ENCODE measurements at regions of chr1 and their contacts with region 1.

Region 1: DNA sequence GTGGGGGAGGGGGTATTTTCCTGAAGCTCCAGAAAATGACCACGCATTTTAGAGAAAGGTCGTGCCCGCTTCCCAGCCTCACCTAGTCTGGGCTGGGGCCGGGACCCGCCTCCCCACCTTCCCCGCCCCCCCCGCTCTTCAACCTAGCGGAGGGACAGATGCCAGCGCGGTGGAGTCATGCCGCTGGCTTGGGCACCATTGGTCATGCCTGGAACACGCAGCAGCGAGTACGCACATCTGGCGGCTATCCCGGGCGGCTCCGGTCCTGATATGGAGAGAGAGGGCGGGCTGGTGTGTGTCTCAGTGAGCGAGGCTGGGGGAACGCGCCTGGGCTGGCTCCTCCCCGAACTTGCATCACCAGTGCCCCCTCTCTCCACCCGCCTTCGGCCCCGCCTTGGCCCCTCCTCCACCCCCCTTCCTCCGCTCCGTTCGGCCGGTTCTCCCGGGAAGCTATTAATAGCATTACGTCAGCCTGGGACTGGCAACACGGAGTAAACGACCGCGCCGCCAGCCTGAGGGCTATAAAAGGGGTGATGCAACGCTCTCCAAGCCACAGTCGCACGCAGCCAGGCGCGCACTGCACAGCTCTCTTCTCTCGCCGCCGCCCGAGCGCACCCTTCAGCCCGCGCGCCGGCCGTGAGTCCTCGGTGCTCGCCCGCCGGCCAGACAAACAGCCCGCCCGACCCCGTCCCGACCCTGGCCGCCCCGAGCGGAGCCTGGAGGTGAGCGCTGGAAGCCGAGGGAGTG is at the start of gene ATF3:
- DNase-seq: peak; percentile 98
- H3K4me3 Mint-ChIP-seq: peak within 1 kb of the TSS; percentile 90
- H3K27ac Mint-ChIP-seq: peak within 1 kb of the TSS; percentile 92
- H3K4me1 Mint-ChIP-seq: peaks cover 52% of the 10 kb centered on the region
- H3K27me3 Mint-ChIP-seq: peaks cover 43% of the 10 kb centered on the region
- total RNA-seq, gene ATF3: 67.4 to 67.7 TPM

Region 2: GRCh38 chr1:212414328-212415106 is 193.9 kb before region 1 on chr1 and contains the start of gene PACC1:
- CTCF ChIA-PET with region 1: no interaction called
- intact Hi-C with region 1: loop called (anchors 5 kb)
- DNase-seq: peak; percentile 88
- H3K4me3 Mint-ChIP-seq: peak within 1 kb of the TSS; percentile 95
- H3K27ac Mint-ChIP-seq: peak within 1 kb of the TSS; percentile 72
- H3K4me1 Mint-ChIP-seq: peaks cover 23% of the 10 kb centered on the region
- H3K27me3 Mint-ChIP-seq: no peaks in the 10 kb centered on the region
- total RNA-seq, gene PACC1: 9.5 to 10.2 TPM

Region 3: DNA sequence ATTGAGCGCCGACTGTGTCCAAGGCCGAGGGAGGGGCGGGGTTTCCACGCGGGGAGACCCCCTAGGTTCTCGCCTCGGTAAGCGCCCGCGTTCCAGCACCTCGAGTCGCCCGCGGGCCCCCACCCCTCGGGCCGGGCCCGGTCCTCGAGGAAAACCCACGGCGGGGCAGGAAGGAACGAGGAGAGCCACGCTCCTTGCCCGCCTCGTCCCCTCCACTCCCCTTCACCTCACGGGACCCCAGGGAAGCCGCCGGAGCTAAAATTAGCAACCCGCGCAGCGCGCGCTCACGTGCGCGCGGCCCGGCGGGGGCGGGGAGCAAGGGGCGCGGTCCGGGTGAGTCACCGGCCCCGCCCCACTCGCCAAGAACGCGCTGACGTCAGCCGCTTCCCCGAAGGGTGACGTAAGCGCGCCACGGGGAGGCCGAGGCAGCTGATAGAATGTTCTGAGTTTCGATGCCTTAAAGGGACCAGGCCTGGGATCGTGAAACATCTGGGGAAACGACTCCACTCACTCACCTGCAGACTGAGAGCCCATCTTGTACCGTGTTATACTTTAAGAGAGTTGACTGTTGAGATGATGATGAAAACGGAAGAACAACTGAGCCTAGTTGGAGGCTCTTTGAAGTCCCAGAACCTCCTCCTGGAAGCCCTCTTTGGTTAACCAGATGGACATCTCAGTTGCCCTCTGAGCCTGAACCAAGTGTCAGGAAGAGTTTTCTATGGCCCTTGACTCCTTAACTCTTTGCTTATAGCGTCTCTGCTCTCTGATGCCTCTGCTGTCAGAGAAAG is 49.5 kb before region 1 on chr1:
- CTCF ChIA-PET with region 1: no interaction called
- intact Hi-C with region 1: loop called (anchors 1 kb)
- DNase-seq: peak; percentile 94
- H3K4me3 Mint-ChIP-seq: peak overlapping the region; percentile 66
- H3K27ac Mint-ChIP-seq: peak overlapping the region; percentile 92
- H3K4me1 Mint-ChIP-seq: peaks cover 13% of the 10 kb centered on the region
- H3K27me3 Mint-ChIP-seq: peaks cover 12% of the 10 kb centered on the region

Region 4: DNA sequence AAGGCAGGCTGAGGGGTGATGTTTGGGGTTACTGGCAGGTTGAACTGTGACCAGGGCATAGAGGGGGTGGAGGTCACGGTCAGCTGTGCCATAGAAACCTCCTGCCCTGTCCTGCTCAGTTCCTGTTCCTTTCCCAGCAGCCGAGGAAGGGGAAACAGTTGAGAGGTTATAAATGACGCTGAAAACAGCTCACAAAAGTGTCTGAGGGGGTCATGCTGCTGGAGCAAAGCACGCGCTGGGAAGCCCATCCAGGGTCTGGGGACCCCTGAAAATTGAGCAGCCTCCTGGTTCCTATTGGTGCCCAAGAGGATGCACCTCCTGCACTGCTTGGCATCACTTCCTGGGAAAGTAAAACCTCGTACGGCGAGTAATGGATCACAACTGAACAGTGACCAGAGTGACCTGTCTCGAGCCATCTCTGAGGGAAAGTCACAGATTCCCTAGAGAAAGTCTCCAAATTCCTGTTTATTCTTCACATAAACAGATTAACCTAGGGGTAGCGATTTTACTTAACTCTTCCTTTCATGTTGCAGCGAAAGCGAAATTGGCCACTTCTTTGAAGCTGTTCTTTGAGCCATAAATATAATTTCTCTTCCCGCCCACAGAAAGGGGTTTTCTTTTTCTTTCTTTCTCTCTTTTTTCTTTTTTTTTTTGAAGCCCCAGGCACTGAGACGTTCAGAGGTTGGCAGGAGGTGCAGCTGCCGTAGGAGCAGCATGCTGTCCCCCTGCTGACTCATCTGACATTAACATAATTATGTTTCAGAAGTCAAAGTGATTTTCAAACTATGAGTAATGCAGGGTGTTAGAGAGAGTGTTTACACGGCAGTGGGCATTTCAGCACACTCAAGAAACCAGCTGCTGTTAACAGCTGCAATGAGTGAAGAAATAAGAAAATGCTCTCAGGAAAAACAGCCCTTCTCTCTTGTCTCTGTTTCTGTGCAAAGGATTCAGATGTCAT is 41.6 kb before region 1 on chr1:
- CTCF ChIA-PET with region 1: no interaction called
- intact Hi-C with region 1: loop called (anchors 1 kb)
- DNase-seq: peak; percentile 80
- H3K4me3 Mint-ChIP-seq: peak overlapping the region; percentile 78
- H3K27ac Mint-ChIP-seq: peak overlapping the region; percentile 88
- H3K4me1 Mint-ChIP-seq: peaks cover 32% of the 10 kb centered on the region
- H3K27me3 Mint-ChIP-seq: no peaks in the 10 kb centered on the region

Region 5: DNA sequence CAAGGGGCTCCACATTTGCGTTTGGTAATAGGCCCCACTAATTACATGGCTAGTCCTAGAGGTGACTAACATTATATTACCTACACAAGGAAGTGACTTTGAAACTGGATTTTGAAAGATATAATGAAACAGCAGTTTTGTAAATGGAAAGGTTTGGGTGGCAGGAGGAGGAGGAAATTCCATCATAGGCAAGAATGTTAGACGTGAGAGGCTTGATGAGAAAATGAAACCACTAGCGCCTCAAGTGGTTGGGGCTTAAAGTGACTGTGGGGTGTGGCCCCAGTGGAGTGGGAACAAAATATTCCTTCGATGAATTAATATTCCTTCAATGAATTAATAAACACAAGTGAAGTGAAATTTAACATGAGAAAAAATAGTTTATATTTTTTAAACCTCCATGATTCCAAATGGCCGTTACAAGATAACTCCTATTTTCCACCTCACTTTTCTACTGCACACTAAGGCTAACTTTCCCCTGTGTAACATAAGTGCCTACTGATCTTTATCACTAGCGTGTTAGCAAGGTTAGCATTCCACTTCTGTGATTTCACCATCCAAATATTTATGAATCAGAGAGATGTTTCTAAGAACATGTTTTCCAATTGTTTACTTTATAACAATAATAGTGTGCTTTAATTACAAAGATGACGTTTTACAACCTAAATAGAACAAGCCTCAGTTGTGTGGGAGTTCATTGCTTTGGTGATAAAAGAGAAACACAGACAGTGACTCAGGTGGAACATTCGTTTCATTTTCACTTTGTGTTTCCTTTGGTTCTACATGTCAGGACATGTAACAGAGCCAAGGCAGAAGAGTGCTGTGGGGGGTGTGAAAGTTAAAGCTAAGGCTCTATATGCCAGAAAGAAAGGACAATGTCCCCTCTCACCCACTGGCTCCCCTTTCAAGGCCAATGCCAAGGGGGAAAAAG is 12.3 kb before region 1 on chr1:
- CTCF ChIA-PET with region 1: interaction called, 8 read pairs
- intact Hi-C with region 1: loop called (anchors 1 kb)
- DNase-seq: peak; percentile 69
- H3K4me3 Mint-ChIP-seq: peak overlapping the region; percentile 44
- H3K27ac Mint-ChIP-seq: peak overlapping the region; percentile 94
- H3K4me1 Mint-ChIP-seq: peaks cover 34% of the 10 kb centered on the region
- H3K27me3 Mint-ChIP-seq: peaks cover 21% of the 10 kb centered on the region

Region 6: DNA sequence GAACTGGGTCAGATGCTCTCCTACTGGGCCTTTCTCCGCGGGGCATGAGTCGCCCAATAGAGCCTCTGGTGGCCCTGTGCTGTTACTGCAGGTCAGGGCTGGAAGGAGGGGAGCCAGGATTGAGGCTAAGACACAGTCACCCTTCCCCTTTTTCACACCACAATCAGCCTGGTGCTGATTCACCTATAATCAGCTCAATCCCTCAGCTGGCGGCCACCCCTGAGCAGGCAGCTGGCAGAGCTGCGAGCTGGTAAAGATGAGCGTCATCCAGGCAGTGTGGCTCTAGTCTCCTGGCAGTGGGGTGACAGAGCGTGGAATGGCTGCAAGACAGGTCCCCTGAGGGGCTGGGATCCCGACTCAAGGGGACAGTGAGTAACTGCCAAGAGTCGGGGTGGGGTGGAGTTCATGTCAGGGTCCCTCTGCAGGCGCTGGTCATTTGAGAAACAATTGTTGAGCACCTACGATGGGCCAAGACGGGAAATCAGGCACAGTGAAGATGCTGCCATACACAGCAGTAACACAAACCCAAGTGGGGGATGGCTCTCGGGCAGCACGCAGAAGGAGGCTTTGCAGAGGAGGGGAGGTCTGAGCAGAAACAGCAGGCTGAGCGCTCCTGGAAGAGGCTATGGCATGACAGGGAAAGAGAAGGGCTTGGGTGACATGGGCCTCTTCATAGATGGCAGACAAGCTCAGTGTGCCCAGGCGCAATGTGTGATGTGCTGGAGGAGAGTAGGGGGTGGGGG is 21.9 kb after region 1 on chr1:
- CTCF ChIA-PET with region 1: interaction called, 14 read pairs
- intact Hi-C with region 1: no loop called
- DNase-seq: peak; percentile 79
- H3K4me3 Mint-ChIP-seq: no peak overlapping the region
- H3K27ac Mint-ChIP-seq: no peak overlapping the region
- H3K4me1 Mint-ChIP-seq: peaks cover 6% of the 10 kb centered on the region
- H3K27me3 Mint-ChIP-seq: no peaks in the 10 kb centered on the region

Measured in activated naive CD4-positive, alpha-beta T cell treated with anti-CD3 and anti-CD28 coated beads for 36 hours (primary cell).